ENCODE measurements at regions of chr6 and their contacts with region 1.

Region 1: GRCh38 chr6:29813809-29814208 is 13.8 kb upstream of the HLA-G start:
- DNase-seq: no peak
- ATAC-seq: no peak
- H3K4me3 Mint-ChIP-seq: no peak overlapping the region
- H3K27ac Mint-ChIP-seq: no peak overlapping the region
- H3K4me1 Mint-ChIP-seq: peaks cover 8% of the 10 kb centered on the region
- H3K27me3 Mint-ChIP-seq: peaks cover 11% of the 10 kb centered on the region

Region 2: DNA sequence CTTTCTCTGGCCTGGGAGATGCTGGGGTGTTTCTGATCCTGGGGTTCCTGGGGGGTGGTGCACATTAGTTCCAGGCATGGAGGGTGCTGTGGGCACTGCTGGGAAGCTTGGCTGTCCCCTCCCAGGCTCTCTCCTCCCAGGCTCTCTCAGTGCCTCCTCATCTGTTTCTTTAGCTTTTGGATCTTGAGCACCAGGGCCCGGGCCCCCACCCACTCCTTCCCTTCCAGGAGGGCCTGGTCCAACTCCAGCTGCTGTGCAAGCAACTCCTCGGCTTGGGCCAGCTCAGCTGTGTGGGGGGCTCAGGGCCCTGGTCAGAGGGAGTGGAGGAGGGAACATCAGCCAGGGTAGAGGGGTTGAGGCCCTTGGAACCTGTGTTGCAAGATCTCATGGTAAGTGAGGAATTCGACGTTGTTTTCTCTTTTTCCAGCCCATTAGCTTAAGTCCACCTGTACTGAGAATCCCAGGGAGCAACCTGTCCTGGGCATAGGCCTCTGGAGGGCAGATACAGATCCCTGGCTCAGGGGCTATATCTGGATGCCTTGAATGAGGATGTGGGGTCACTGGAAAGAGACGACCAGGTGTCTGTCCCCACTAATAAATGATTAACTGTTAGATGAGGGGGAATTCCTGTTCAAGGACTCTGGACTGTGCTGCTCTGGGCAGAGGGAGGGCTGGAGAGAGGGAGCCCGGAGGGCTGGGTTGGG is 94.0 kb after region 1 on chr6:
- CTCF ChIA-PET with region 1: no interaction called
- POLR2A ChIA-PET with region 1: interaction called, 4 read pairs
- intact Hi-C with region 1: loop called (anchors 1 to 5 kb)
- DNase-seq: no peak
- ATAC-seq: no peak
- H3K4me3 Mint-ChIP-seq: no peak overlapping the region
- H3K27ac Mint-ChIP-seq: no peak overlapping the region
- H3K4me1 Mint-ChIP-seq: peaks cover 13% of the 10 kb centered on the region
- H3K27me3 Mint-ChIP-seq: peaks cover 23% of the 10 kb centered on the region